ENCODE measurements at regions of chr14 and their contacts with region 1.

Region 1: DNA sequence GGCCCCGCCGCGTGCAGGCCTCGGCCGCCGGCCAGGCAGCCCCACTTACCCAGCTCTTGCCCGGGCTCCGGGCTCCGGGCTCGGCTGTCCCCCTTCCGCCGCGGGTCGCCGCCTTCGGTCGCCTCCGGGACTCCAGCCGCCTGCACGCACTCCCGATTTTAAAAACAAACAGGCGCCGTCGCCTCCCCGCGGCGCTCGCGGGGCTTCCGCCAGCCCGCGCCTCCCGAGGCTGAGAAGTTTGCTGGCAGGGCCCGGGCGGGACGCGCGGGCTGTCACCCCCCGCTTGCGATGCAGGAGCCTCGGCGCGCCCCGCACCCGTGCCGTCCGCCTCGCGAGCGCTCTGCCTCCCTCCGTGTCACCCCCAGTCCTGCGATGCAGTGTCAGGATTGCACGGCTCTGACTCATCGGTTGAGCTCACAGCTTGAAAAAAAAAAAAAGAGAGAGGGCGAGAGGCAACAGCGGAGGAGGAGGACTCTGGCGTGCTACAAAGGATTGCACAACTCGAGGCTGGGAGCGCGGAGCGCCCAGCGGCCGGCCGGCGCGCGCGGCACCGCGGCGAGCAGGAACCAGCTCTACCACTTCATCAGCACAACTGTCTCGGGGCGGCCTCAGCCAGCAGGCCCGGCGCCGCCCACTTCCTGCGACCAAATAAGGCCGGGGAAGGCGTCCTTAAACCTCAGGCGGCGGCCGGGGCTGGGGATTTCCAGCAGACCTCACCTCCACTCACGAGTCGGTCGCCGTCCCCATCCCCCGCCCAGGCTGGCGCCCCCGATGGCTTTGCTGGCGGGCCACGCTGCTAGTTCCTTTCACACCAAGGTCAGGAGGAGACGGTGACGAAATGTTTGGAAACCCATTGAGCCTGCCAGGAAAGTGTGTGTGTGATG is 45.8 kb upstream of the PNMA1 start:
- DNase-seq: peak; percentile 97
- ATAC-seq: peak; percentile 79
- H3K4me3 Mint-ChIP-seq: peak overlapping the region; percentile 87
- H3K27ac Mint-ChIP-seq: peak overlapping the region; percentile 90
- H3K4me1 Mint-ChIP-seq: peaks cover 77% of the 10 kb centered on the region
- H3K27me3 Mint-ChIP-seq: no peaks in the 10 kb centered on the region

Region 2: GRCh38 chr14:73700325-73700724 is 59.6 kb before region 1 on chr14:
- CTCF ChIA-PET with region 1: no interaction called
- DNase-seq: no peak
- ATAC-seq: no peak
- H3K4me3 Mint-ChIP-seq: no peak overlapping the region
- H3K27ac Mint-ChIP-seq: no peak overlapping the region
- H3K4me1 Mint-ChIP-seq: peaks cover 35% of the 10 kb centered on the region
- H3K27me3 Mint-ChIP-seq: no peaks in the 10 kb centered on the region

Region 3: GRCh38 chr14:73771848-73772638 is 12.1 kb after region 1 on chr14:
- CTCF ChIA-PET with region 1: interaction called, 66 read pairs
- DNase-seq: peak; percentile 84
- ATAC-seq: peak; percentile 76
- H3K4me3 Mint-ChIP-seq: peak overlapping the region; percentile 49
- H3K27ac Mint-ChIP-seq: peak overlapping the region; percentile 86
- H3K4me1 Mint-ChIP-seq: peaks cover 72% of the 10 kb centered on the region
- H3K27me3 Mint-ChIP-seq: no peaks in the 10 kb centered on the region

Region 4: GRCh38 chr14:73785873-73786695 is 26.1 kb after region 1 on chr14:
- CTCF ChIA-PET with region 1: interaction called, 97 read pairs
- DNase-seq: peak; percentile 88
- ATAC-seq: peak; percentile 67
- H3K4me3 Mint-ChIP-seq: peak overlapping the region; percentile 85
- H3K27ac Mint-ChIP-seq: peak overlapping the region; percentile 95
- H3K4me1 Mint-ChIP-seq: peaks cover 56% of the 10 kb centered on the region
- H3K27me3 Mint-ChIP-seq: no peaks in the 10 kb centered on the region

Region 5: DNA sequence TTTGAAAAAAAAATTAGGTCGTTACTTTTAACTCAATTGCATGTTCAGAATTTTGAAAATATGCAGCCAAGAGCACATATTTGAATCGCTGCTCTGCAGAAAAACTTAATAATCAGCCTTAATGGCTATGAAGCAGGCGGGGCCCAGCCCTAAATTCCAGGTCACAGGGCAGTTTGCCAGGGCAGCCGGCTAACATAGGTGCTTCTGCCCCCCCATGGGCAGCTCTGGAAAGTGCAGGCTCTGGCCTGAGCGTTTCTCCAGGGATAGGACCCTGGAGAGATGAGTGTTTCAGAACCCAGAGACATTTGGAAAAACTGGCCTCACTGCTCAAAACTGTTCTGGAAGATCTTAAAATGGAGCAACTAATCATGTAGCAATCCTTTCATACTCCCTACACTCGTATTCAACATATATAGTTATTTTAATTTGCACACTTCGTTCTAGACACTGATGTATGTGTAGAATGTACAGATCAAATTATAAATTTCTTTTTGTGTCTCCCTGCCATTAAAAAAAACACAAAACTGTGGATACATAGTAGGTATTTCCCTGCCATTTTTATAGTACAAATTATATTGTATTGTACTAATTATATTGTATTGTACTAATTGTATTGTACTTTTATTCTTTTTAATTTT is 65.7 kb after region 1 on chr14:
- CTCF ChIA-PET with region 1: interaction called, 151 read pairs
- DNase-seq: peak; percentile 86
- ATAC-seq: peak; percentile 70
- H3K4me3 Mint-ChIP-seq: no peak overlapping the region
- H3K27ac Mint-ChIP-seq: no peak overlapping the region
- H3K4me1 Mint-ChIP-seq: peaks cover 37% of the 10 kb centered on the region
- H3K27me3 Mint-ChIP-seq: no peaks in the 10 kb centered on the region

Region 6: GRCh38 chr14:73851644-73852382 is 91.9 kb after region 1 on chr14 and contains the start of gene PTGR2:
- CTCF ChIA-PET with region 1: interaction called, 11 read pairs
- DNase-seq: peak; percentile 93
- ATAC-seq: peak; percentile 98
- H3K4me3 Mint-ChIP-seq: peak within 1 kb of the TSS; percentile 95
- H3K27ac Mint-ChIP-seq: peak within 1 kb of the TSS; percentile 99
- H3K4me1 Mint-ChIP-seq: peaks cover 22% of the 10 kb centered on the region
- H3K27me3 Mint-ChIP-seq: peaks cover 5% of the 10 kb centered on the region
- total RNA-seq, gene PTGR2: 1.6 to 3.5 TPM

Region 7: DNA sequence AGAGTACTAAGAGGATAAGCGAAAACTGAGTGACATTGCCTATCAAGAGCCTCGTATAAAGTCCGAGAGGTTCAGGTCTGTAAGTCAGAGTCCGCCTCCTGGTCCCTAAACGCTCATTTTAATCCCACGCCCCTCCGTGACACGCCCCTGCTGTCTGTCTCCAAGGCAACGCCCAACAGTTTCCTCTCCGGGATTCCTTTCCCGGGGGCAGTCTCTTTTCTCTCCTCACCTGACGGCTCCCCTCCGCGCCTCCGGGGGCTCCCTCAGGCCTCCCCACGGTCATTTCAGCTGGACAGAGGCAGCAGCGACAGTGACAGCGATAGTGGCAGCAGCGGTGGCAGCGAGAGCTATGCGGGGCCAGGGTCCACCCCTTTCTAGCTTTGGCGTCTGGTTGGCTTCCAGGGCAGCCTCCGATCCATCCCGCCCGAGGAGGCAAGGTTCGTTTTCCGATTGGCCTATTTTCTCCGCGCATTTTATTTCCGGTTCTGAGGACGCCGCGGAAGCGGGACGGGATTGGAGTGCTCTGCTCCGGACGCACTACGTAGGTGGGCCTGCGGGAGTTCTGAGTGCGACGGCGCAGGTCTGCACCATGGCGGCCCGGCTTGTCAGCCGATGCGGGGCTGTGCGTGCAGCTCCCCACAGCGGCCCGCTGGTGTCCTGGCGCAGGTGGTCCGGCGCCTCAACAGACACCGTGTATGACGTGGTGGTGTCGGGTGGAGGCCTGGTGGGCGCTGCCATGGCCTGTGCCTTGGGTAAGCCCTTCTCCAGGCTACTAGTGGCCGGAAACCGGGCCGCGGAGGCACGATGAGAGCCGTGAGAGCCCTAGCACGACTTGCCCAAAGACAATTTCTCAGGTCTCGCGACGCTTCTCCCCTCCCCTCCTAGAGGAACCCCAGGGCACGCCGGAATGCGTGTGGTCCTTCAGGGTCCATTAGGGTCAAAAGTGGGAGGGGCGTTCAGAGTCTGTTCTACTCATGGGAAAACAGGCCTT is 190.1 kb after region 1 on chr14 and contains the starts of genes COQ6 and FAM161B:
- CTCF ChIA-PET with region 1: no interaction called
- DNase-seq: peak; percentile 96
- ATAC-seq: peak; percentile 96
- H3K4me3 Mint-ChIP-seq: peak within 1 kb of the TSS; percentile 98
- H3K27ac Mint-ChIP-seq: peak within 1 kb of the TSS; percentile 88
- H3K4me1 Mint-ChIP-seq: peaks cover 32% of the 10 kb centered on the region
- H3K27me3 Mint-ChIP-seq: no peaks in the 10 kb centered on the region
- total RNA-seq, gene COQ6: 17.7 to 18.1 TPM
- total RNA-seq, gene FAM161B: 1.2 to 1.8 TPM